H1 (cell line): ENCODE measurements at regions of chr19 and their contacts with region 1.

Region 1: DNA sequence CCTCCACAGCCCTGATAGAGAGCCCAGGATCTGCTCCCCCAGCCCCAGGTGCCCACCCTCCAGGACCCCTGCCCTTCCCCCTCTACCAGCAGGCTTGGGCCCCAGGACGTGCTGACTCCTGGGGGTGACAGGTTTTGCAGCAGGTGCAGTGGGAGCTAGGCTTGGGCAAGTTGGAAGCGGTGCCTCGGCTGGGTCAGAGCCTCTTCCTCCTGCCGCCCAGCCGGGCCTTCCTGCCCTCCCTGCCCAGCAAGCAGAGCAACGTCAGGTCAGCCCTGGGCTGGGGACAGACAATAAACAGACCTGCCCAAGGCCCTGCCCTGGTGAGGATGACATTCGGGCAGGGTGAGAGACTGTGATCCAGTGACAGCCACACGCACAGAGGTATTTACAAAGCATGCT is 9.2 kb upstream of the NCCRP1 start:
- DNase-seq: no peak
- H3K4me3 ChIP-seq: no peak overlapping the region
- H3K27ac ChIP-seq: no peak overlapping the region
- H3K4me1 ChIP-seq: peaks cover 0 to 3% (median under 1%) of the 10 kb centered on the region in 4 experiments; a peak in 2 of 7 replicates
- H3K27me3 ChIP-seq: no peaks in the 10 kb centered on the region
- CTCF ChIP-seq: no peak
- EP300 ChIP-seq: no peak
- POLR2A ChIP-seq: no peak
- RAD21 ChIP-seq: no peak

Region 2: DNA sequence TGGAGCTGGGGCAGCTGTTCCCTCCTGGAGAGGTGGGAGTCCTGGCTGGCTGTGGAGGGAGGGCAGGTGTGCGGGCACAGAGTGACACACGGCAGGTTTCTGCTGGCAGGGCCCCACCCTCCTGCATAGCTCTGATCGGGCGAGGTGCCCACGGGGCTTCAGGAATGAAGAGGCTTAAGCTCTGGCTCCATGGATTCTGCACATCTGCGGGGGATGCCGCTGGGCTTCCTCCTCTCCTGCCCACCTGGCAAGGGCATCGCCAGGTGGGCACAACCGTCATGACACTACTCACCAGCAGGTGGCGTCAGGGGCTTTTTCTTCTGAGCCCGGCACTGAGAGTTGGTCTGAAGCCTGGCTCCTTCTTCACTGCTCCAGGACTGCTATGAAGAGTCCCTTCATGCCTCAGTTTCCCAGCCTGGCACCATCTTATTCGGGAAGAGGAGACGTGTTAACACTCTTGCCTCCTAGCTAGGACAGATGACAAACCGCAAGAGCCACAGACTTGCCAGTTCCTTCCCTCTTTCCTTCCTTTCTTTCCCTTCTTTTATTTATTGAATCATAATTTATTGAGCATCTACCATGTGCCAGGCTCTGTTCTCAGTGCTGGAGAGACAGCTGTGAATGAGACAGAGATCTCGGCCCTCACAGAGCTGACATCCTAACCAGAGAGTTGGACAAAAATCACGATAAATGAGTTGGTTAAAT is 77.1 kb before region 1 on chr19:
- CTCF ChIA-PET with region 1: interaction called, 11 read pairs
- POLR2A ChIA-PET with region 1: no interaction called
- DNase-seq: peak in 1 of 2 experiments; percentile 92
- H3K4me3 ChIP-seq: no peak overlapping the region
- H3K27ac ChIP-seq: no peak overlapping the region
- H3K4me1 ChIP-seq: peaks cover 0 to 5% (median 0%) of the 10 kb centered on the region in 4 experiments; a peak in 3 of 7 replicates
- H3K27me3 ChIP-seq: no peaks in the 10 kb centered on the region
- CTCF ChIP-seq: peak; percentile 79 to 87 (median 82)
- EP300 ChIP-seq: no peak
- POLR2A ChIP-seq: no peak
- RAD21 ChIP-seq: peak; percentile 73 to 82

Region 3: GRCh38 chr19:39125554-39126311 is 61.8 kb before region 1 on chr19 and contains the start of gene PAK4:
- CTCF ChIA-PET with region 1: interaction called, 11 read pairs
- POLR2A ChIA-PET with region 1: interaction called, 7 read pairs
- DNase-seq: peak; percentile 84 to 98
- H3K4me3 ChIP-seq: peak within 1 kb of the TSS; percentile 73 to 94 (median 78)
- H3K27ac ChIP-seq: peak within 1 kb of the TSS; percentile 62; the same call in 1 of the 2 replicates
- H3K4me1 ChIP-seq: peaks cover 0 to 14% (median 6%) of the 10 kb centered on the region in 4 experiments; a peak in 6 of 7 replicates
- H3K27me3 ChIP-seq: no peaks in the 10 kb centered on the region
- CTCF ChIP-seq: no peak
- EP300 ChIP-seq: no peak
- POLR2A ChIP-seq: peak in 1 of 2 experiments; percentile 67; a peak in 1 of 3 replicates
- RAD21 ChIP-seq: no peak
- total RNA-seq, gene PAK4: 64.4 and 67.6 TPM in 2 replicates

Region 4: DNA sequence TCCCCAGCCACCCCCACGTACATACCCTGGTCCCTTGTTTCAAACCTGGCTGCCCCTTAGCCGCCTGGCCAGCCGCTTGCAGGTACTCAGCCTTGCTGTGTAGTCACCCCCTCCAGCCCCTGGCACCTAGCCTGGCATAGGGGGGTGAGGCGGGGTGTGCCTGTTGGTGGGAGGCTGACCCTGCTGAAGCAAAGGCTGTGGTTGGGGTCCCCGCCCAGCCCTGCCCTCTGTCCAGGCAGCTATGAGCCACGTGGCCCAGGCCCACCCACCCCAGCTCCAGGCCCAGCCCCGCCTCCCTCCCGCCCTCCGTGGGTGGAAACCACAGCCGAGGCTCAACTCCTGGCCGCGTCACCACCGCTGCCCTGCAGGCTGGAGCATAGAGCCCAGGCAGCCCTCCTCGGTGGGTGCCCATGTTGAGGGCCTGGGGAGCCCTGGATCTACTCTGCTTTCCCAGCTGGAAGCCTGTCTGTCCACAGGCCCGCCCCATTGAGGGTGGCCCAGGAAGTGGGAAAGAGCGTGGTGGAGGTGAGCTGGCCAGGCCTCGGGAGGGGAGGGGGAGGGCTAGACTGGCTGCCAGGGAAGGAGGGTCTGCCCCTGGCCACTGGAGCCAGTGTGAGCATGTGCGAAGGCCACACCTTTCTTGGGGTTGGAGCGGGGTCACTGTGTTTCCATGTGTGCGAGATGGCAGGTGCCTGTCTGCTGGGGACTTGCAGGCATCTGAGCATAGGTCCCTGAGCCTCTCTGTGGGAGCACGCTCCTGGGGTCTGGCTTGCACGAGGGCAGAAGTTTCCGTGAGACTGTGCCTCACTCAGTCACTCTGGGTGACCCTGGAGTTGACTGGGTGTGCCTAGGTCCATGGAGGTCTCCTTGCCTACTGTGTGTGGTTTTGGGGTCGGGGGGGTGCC is 31.0 kb before region 1 on chr19:
- CTCF ChIA-PET with region 1: interaction called, 27 read pairs
- POLR2A ChIA-PET with region 1: no interaction called
- DNase-seq: no peak
- H3K4me3 ChIP-seq: no peak overlapping the region
- H3K27ac ChIP-seq: no peak overlapping the region
- H3K4me1 ChIP-seq: peaks cover 4 to 39% (median 20%) of the 10 kb centered on the region in 4 experiments
- H3K27me3 ChIP-seq: peaks cover 0 to 1% (median 0%) of the 10 kb centered on the region in 4 experiments; a peak in 1 of 7 replicates
- CTCF ChIP-seq: no peak
- EP300 ChIP-seq: no peak
- POLR2A ChIP-seq: no peak
- RAD21 ChIP-seq: no peak

Region 5: GRCh38 chr19:39177110-39177699 is 10.4 kb before region 1 on chr19:
- CTCF ChIA-PET with region 1: interaction called, 33 read pairs
- POLR2A ChIA-PET with region 1: interaction called, 5 read pairs
- DNase-seq: no peak
- H3K4me3 ChIP-seq: no peak overlapping the region
- H3K27ac ChIP-seq: no peak overlapping the region
- H3K4me1 ChIP-seq: no peaks in the 10 kb centered on the region
- H3K27me3 ChIP-seq: no peaks in the 10 kb centered on the region
- CTCF ChIP-seq: no peak
- EP300 ChIP-seq: no peak
- POLR2A ChIP-seq: no peak
- RAD21 ChIP-seq: no peak

Region 6: GRCh38 chr19:39199025-39199424 is 11.5 kb after region 1 on chr19:
- CTCF ChIA-PET with region 1: interaction called, 28 read pairs
- POLR2A ChIA-PET with region 1: interaction called, 6 read pairs
- DNase-seq: no peak
- H3K4me3 ChIP-seq: no peak overlapping the region
- H3K27ac ChIP-seq: no peak overlapping the region
- H3K4me1 ChIP-seq: peaks cover 0 to 9% (median 6%) of the 10 kb centered on the region in 4 experiments; a peak in 5 of 7 replicates
- H3K27me3 ChIP-seq: peaks cover 13 to 33% (median 33%) of the 10 kb centered on the region in 4 experiments
- CTCF ChIP-seq: no peak
- EP300 ChIP-seq: no peak
- POLR2A ChIP-seq: no peak
- RAD21 ChIP-seq: no peak

Region 7: DNA sequence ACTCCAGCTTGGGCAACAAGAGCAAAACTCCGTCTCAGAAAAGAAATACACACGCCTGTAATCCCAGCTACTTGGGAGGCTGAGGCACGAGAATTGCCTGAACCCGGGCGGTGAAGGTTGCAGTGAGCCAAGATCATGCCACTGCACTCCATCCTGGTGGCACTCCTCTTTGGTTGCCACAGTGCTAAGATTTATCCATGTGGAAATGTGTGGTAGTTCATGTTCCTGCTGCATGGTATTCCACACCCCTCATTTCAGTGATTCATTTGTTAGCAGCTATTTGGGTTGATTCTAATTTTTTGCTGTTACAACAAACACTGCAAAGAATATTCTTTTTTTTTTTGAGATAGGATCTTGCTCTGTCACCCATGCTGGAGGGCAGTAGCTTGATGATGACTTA is 45.1 kb after region 1 on chr19:
- CTCF ChIA-PET with region 1: no interaction called
- POLR2A ChIA-PET with region 1: no interaction called
- DNase-seq: no peak
- H3K4me3 ChIP-seq: no peak overlapping the region
- H3K27ac ChIP-seq: no peak overlapping the region
- H3K4me1 ChIP-seq: no peaks in the 10 kb centered on the region
- H3K27me3 ChIP-seq: 0 out of 7 replicates have a peak, but pooled peaks cover 0 to 3% (median 0%) of the 10 kb centered on the region in 4 experiments
- CTCF ChIP-seq: no peak
- EP300 ChIP-seq: no peak
- POLR2A ChIP-seq: no peak
- RAD21 ChIP-seq: no peak

Region 8: DNA sequence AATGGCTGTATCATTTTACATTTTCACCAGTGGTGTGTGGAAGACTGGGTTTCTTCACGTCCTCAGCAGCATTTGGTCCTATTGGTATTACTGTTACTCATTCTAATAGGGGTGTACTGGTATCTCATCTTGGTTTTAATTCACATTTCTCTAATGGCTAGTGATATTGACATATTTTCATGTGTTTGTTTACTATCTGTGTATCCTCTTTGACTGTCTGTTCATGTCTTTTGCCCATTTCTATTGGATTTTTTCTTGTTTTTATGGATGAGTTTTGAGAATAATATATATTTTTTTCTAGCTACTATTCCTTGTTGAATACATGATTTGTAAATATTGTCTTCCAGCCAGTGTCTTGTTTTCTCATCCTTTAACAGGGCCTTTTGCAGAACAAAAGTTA is 94.5 kb after region 1 on chr19:
- CTCF ChIA-PET with region 1: no interaction called
- POLR2A ChIA-PET with region 1: no interaction called
- DNase-seq: no peak
- H3K4me3 ChIP-seq: no peak overlapping the region
- H3K27ac ChIP-seq: no peak overlapping the region
- H3K4me1 ChIP-seq: no peaks in the 10 kb centered on the region
- H3K27me3 ChIP-seq: no peaks in the 10 kb centered on the region; a peak in 2 of 7 replicates
- CTCF ChIP-seq: no peak
- EP300 ChIP-seq: no peak
- POLR2A ChIP-seq: no peak
- RAD21 ChIP-seq: no peak